ENCODE measurements at regions of chr14 and their contacts with region 1.

Region 1: GRCh38 chr14:34671716-34672115 is 41.8 kb upstream of the SNX6 start:
- DNase-seq: no peak
- H3K4me3 Mint-ChIP-seq: no peak overlapping the region
- H3K27ac Mint-ChIP-seq: no peak overlapping the region
- H3K4me1 Mint-ChIP-seq: no peaks in the 10 kb centered on the region
- H3K27me3 Mint-ChIP-seq: no peaks in the 10 kb centered on the region
- CTCF ChIP-seq: no peak

Region 2: DNA sequence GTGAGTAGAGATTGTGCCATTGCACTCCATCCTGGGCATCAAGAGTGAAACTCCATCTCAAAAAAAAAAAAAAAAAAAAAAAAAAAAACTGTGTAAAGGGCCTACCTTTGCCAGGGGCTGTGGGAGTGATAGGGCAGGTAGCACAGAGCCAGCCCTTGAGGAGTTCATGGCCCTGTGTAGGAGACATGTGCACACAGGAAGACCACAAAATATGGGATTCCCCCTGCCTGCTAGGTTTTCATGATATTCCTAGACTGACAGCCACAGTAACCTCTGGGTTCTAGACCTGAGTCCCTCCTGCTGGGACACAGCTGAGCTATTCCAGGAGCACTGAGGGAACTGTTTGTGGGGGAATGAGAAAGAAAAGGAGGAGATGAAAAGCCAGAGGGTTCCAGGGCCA is 201.4 kb before region 1 on chr14:
- CTCF ChIA-PET with region 1: no interaction called
- POLR2A ChIA-PET with region 1: no interaction called
- intact Hi-C with region 1: no loop called
- DNase-seq: no peak
- H3K4me3 Mint-ChIP-seq: no peak overlapping the region
- H3K27ac Mint-ChIP-seq: no peak overlapping the region
- H3K4me1 Mint-ChIP-seq: no peaks in the 10 kb centered on the region
- H3K27me3 Mint-ChIP-seq: no peaks in the 10 kb centered on the region
- CTCF ChIP-seq: no peak

Region 3: DNA sequence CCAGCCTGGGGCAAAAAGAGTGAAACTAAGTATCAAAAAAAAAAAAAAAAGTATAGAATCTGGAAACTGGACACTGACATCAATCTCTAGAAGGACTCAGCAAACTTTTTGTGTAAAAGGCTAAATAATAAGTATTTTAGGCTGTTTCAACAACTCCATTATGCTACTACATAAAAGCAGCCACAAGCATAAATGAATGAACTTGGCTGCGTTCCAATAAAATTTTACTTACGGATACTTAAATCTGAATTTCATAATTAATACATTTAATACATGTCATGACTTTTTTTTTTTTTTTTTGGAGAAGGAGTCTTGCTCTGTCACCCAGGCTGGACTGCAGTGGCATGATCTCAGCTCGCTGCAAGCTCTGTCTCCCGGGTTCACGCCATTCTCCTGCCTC is 106.9 kb before region 1 on chr14:
- CTCF ChIA-PET with region 1: no interaction called
- POLR2A ChIA-PET with region 1: no interaction called
- intact Hi-C with region 1: no loop called
- DNase-seq: no peak
- H3K4me3 Mint-ChIP-seq: no peak overlapping the region
- H3K27ac Mint-ChIP-seq: no peak overlapping the region
- H3K4me1 Mint-ChIP-seq: no peaks in the 10 kb centered on the region
- H3K27me3 Mint-ChIP-seq: no peaks in the 10 kb centered on the region
- CTCF ChIP-seq: no peak

Region 4: DNA sequence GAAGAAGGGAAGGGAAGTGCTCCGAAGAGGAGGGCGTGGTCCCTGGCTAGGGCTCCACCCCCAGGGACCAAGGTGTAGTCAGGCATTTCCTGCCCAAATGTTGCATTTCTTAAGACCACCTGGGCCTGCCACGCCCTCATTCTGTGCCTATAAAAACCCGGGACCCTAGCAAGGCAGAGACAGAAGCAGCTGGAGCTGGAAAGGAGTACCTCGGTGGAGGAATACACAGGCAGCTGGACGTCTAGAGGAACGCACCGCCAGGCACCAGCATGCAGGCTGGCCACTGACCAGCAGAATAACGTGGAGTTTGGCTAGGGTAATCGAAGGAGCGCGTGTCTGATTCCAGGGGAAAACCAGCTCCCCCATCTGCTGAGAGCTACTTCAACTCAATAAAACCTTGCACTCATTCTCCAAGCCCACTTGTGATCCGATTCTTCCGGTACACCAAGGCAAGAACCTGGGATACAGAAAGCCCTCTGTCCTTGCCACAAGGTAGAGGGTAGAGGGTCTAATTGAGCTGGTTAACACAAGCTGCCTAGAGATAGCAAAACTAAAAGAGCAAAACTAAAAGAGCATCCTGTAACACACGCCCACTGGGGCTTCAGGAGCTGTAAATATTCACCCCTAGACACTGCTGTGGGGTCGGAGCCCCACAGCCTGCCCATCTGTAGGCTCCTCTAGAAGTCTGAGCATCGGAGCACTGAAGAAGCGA is 21.7 kb after region 1 on chr14:
- CTCF ChIA-PET with region 1: interaction called, 28 read pairs
- POLR2A ChIA-PET with region 1: no interaction called
- intact Hi-C with region 1: no loop called
- DNase-seq: peak; percentile 29
- H3K4me3 Mint-ChIP-seq: no peak overlapping the region
- H3K27ac Mint-ChIP-seq: peak overlapping the region; percentile 18
- H3K4me1 Mint-ChIP-seq: peaks cover 9% of the 10 kb centered on the region
- H3K27me3 Mint-ChIP-seq: no peaks in the 10 kb centered on the region
- CTCF ChIP-seq: no peak

Region 5: DNA sequence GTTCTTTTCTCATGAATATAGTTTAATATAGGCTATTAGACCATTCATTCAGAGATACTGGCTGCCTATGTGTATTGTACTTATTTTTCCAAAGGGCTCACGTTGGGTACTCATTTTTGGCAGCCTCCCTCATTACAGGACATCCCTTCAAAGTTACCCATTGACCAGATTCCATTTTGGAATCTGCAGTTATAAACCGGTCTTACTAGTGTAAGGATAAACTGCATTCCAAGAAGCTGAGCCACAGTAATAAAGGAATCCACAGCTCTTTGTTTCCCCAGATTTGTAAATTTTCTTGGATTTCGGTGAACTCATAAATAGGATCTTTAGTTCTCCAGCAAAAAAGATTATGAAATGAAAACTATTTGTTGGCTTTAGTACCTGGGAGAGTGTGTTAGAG is 61.5 kb after region 1 on chr14:
- CTCF ChIA-PET with region 1: interaction called, 15 read pairs
- POLR2A ChIA-PET with region 1: no interaction called
- intact Hi-C with region 1: no loop called
- DNase-seq: no peak
- H3K4me3 Mint-ChIP-seq: no peak overlapping the region
- H3K27ac Mint-ChIP-seq: no peak overlapping the region
- H3K4me1 Mint-ChIP-seq: no peaks in the 10 kb centered on the region
- H3K27me3 Mint-ChIP-seq: no peaks in the 10 kb centered on the region
- CTCF ChIP-seq: no peak

Region 6: GRCh38 chr14:35034440-35034833 is 362.7 kb after region 1 on chr14:
- CTCF ChIA-PET with region 1: no interaction called
- POLR2A ChIA-PET with region 1: no interaction called
- intact Hi-C with region 1: no loop called
- DNase-seq: no peak
- H3K4me3 Mint-ChIP-seq: no peak overlapping the region
- H3K27ac Mint-ChIP-seq: no peak overlapping the region
- H3K4me1 Mint-ChIP-seq: no peaks in the 10 kb centered on the region
- H3K27me3 Mint-ChIP-seq: no peaks in the 10 kb centered on the region
- CTCF ChIP-seq: no peak

Measured in MCF 10A (cell line).